CD8-positive, alpha-beta T cell (primary cell): ENCODE measurements at regions of chr9 and their contacts with region 1.

Region 1: GRCh38 chr9:15422372-15423230 is at the start of gene SNAPC3:
- DNase-seq: peak; percentile 85 to 96 (median 92)
- ATAC-seq: peak; percentile 95
- H3K4me3 ChIP-seq: peak within 1 kb of the TSS; percentile 65 to 83
- H3K4me3 Mint-ChIP-seq: peak within 1 kb of the TSS; percentile 91
- H3K27ac ChIP-seq: peak within 1 kb of the TSS; percentile 64 to 67
- H3K27ac Mint-ChIP-seq: peak within 1 kb of the TSS; percentile 87
- H3K4me1 ChIP-seq: peaks cover 22% of the 10 kb centered on the region
- H3K4me1 Mint-ChIP-seq: peaks cover 38% of the 10 kb centered on the region
- H3K27me3 ChIP-seq: no peaks in the 10 kb centered on the region
- H3K27me3 Mint-ChIP-seq: no peaks in the 10 kb centered on the region
- CTCF ChIP-seq: no peak
- total RNA-seq, gene SNAPC3: 3.4 to 5.0 TPM

Region 2: GRCh38 chr9:15249042-15249818 is 173.4 kb before region 1 on chr9:
- CTCF ChIA-PET with region 1: no interaction called
- POLR2A ChIA-PET with region 1: no interaction called
- intact Hi-C with region 1: no loop called
- DNase-seq: no peak
- ATAC-seq: no peak
- H3K4me3 ChIP-seq: no peak overlapping the region
- H3K4me3 Mint-ChIP-seq: no peak overlapping the region
- H3K27ac ChIP-seq: no peak overlapping the region
- H3K27ac Mint-ChIP-seq: no peak overlapping the region
- H3K4me1 ChIP-seq: no peaks in the 10 kb centered on the region
- H3K4me1 Mint-ChIP-seq: peaks cover 67% of the 10 kb centered on the region
- H3K27me3 ChIP-seq: no peaks in the 10 kb centered on the region
- H3K27me3 Mint-ChIP-seq: no peaks in the 10 kb centered on the region
- CTCF ChIP-seq: no peak

Region 3: GRCh38 chr9:15349892-15350778 is 72.5 kb before region 1 on chr9:
- CTCF ChIA-PET with region 1: interaction called, 3 read pairs
- POLR2A ChIA-PET with region 1: interaction called, 4 read pairs
- intact Hi-C with region 1: loop called (anchors 1 to 5 kb)
- DNase-seq: peak in 2 of 9 experiments; percentile 11 to 17
- ATAC-seq: no peak
- H3K4me3 ChIP-seq: no peak overlapping the region
- H3K4me3 Mint-ChIP-seq: no peak overlapping the region
- H3K27ac ChIP-seq: no peak overlapping the region
- H3K27ac Mint-ChIP-seq: no peak overlapping the region
- H3K4me1 ChIP-seq: peaks cover 19% of the 10 kb centered on the region
- H3K4me1 Mint-ChIP-seq: peaks cover 22% of the 10 kb centered on the region
- H3K27me3 ChIP-seq: no peaks in the 10 kb centered on the region
- H3K27me3 Mint-ChIP-seq: no peaks in the 10 kb centered on the region
- CTCF ChIP-seq: no peak

Region 4: DNA sequence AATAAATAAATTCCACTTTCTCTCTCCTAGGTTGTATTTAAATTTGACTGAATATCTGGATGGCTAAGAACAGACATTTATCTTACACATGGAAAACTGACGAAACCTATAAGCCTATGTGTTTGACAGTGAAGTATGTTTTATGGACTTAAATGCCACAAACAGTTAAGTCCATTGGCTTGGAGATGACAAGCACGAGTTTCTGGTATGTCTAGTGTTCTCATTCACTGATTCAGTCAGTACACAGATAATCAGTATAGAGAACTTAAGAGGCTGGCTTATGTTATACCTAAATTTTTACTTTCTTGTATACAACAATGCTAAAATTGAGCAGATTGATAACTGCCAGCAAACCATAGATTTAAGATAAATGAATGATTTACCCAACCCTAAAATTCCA is 39.0 kb after region 1 on chr9:
- CTCF ChIA-PET with region 1: no interaction called
- POLR2A ChIA-PET with region 1: no interaction called
- intact Hi-C with region 1: loop called in 1 of 2 experiments (anchors 5 kb)
- DNase-seq: no peak
- ATAC-seq: no peak
- H3K4me3 ChIP-seq: no peak overlapping the region
- H3K4me3 Mint-ChIP-seq: no peak overlapping the region
- H3K27ac ChIP-seq: no peak overlapping the region
- H3K27ac Mint-ChIP-seq: peak overlapping the region; percentile 41
- H3K4me1 ChIP-seq: no peaks in the 10 kb centered on the region
- H3K4me1 Mint-ChIP-seq: peaks cover under 1% of the 10 kb centered on the region
- H3K27me3 ChIP-seq: no peaks in the 10 kb centered on the region
- H3K27me3 Mint-ChIP-seq: no peaks in the 10 kb centered on the region
- CTCF ChIP-seq: no peak

Region 5: GRCh38 chr9:15552636-15553527 is 130.3 kb after region 1 on chr9 and contains the start of gene CCDC171:
- CTCF ChIA-PET with region 1: no interaction called
- POLR2A ChIA-PET with region 1: interaction called, 3 read pairs
- intact Hi-C with region 1: loop called (anchors 1 kb)
- DNase-seq: peak; percentile 67 to 96 (median 84)
- ATAC-seq: peak; percentile 79
- H3K4me3 ChIP-seq: peak within 1 kb of the TSS; percentile 88 to 98
- H3K4me3 Mint-ChIP-seq: peak within 1 kb of the TSS; percentile 95
- H3K27ac ChIP-seq: peak within 1 kb of the TSS; percentile 54 to 75
- H3K27ac Mint-ChIP-seq: peak within 1 kb of the TSS; percentile 82
- H3K4me1 ChIP-seq: no peaks in the 10 kb centered on the region
- H3K4me1 Mint-ChIP-seq: peaks cover 9% of the 10 kb centered on the region
- H3K27me3 ChIP-seq: no peaks in the 10 kb centered on the region
- H3K27me3 Mint-ChIP-seq: no peaks in the 10 kb centered on the region
- CTCF ChIP-seq: no peak
- total RNA-seq, gene CCDC171: 1.1 to 1.7 TPM